ENCODE measurements at regions of chr15 and their contacts with region 1.

Region 1: DNA sequence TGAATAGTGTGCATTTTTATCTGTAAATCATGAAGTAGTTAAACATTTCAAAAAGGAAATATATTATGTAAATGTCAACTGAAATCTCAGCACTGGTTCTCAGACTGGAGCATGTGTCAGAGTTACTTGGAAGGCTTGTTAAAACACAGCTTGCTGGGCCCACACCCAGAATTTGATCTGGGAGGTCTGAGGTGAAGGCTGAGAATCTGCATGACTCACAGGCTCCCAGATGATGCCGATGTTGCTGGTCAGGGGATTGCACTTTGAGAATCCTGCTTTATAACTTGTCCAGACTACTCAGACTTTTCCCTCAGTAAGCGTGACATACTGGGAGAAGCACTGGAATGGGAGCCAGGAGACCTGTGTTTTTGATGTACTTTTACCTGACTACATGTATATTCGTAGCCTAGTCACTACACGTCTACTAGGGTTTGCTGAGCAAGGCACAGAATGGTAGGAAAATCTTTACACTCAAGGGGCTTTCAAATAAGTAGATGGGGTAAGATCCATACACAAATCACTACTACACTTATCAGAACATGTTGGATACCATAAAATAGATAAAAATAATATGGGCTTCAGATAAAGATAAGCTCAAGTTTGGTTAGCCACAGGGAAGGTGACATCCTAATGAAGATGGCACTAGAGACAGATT is 77.1 kb upstream of the MEX3B start:
- DNase-seq: peak; percentile 75 to 90 (median 86)
- H3K4me3 ChIP-seq: no peak overlapping the region
- H3K27ac ChIP-seq: peak overlapping the region in 1 of 5 donors; percentile 30
- H3K4me1 ChIP-seq: peaks cover 0 to 8% of the 10 kb centered on the region in 2 donors
- H3K27me3 ChIP-seq: no peaks in the 10 kb centered on the region
- CTCF ChIP-seq: peak in 1 of 6 experiments; percentile 12
- POLR2A ChIP-seq: no peak

Region 2: GRCh38 chr15:81480645-81481053 is 642.2 kb before region 1 on chr15:
- intact Hi-C with region 1: no loop called
- DNase-seq: peak in 4 of 7 donors; percentile 19 to 34 (median 27)
- H3K4me3 ChIP-seq: no peak overlapping the region
- H3K27ac ChIP-seq: no peak overlapping the region
- H3K4me1 ChIP-seq: no peaks in the 10 kb centered on the region
- H3K27me3 ChIP-seq: no peaks in the 10 kb centered on the region
- CTCF ChIP-seq: peak; percentile 70 to 96 (median 80)
- POLR2A ChIP-seq: no peak

Region 3: GRCh38 chr15:81492331-81492963 is 630.4 kb before region 1 on chr15:
- intact Hi-C with region 1: loop called in 1 of 2 experiments (anchors 10 kb)
- DNase-seq: no peak
- H3K4me3 ChIP-seq: no peak overlapping the region
- H3K27ac ChIP-seq: no peak overlapping the region
- H3K4me1 ChIP-seq: no peaks in the 10 kb centered on the region
- H3K27me3 ChIP-seq: no peaks in the 10 kb centered on the region
- CTCF ChIP-seq: no peak
- POLR2A ChIP-seq: no peak

Region 4: DNA sequence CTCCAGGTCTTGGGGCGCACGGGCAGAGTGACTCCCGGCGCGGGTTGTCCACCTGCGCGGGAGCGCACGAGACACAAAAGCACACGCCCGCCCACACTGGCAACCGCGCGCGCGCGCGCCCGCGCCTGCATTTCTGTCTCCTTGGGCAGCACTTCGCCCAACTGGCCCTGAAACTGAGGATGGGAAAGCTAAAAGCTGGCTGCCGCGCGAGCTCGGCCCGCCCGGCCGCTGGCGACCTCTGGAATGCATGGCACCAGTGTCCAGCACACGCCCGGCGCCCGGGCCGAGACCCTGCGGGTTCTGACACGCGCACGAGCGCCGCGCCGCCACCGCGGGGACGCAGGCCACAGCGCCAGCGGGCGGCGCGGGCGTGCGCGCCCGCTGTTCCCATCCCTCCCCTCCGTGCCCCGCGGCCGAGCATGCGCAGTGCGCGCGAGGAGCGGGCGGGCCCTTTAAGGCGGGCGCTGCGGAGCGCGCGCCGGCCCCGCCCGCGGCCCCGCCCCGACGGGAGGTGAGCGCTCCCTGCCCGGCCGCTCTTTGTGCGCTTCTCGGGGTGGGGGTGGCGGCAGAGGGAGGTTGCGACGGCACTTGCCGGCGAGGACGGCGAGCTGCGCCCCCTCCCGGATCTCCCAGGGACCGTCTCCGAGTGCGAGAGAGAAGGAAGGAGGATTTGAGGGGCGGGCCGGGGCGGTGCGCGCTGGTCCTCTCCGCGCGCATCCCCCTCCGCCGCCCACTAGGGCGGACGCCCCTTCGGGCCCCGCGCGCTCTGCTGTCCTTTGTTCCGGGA is 76.0 kb before region 1 on chr15:
- intact Hi-C with region 1: no loop called
- DNase-seq: peak; percentile 80 to 90 (median 87)
- H3K4me3 ChIP-seq: peak overlapping the region; percentile 22 to 92 (median 68)
- H3K27ac ChIP-seq: peak overlapping the region in 4 of 5 donors; percentile 73 to 95 (median 84)
- H3K4me1 ChIP-seq: peaks cover 3 to 20% of the 10 kb centered on the region in 2 donors
- H3K27me3 ChIP-seq: no peaks in the 10 kb centered on the region
- CTCF ChIP-seq: peak; percentile 21 to 76 (median 50)
- POLR2A ChIP-seq: peak; percentile 28 to 64

Region 5: GRCh38 chr15:82064824-82065223 is 58.0 kb before region 1 on chr15:
- intact Hi-C with region 1: no loop called
- DNase-seq: no peak
- H3K4me3 ChIP-seq: no peak overlapping the region
- H3K27ac ChIP-seq: no peak overlapping the region
- H3K4me1 ChIP-seq: no peaks in the 10 kb centered on the region
- H3K27me3 ChIP-seq: peaks cover 33% of the 10 kb centered on the region
- CTCF ChIP-seq: no peak
- POLR2A ChIP-seq: no peak